Body of pancreas (tissue), 4 donors: ENCODE measurements at regions of chr15 and their contacts with region 1.

Region 1: DNA sequence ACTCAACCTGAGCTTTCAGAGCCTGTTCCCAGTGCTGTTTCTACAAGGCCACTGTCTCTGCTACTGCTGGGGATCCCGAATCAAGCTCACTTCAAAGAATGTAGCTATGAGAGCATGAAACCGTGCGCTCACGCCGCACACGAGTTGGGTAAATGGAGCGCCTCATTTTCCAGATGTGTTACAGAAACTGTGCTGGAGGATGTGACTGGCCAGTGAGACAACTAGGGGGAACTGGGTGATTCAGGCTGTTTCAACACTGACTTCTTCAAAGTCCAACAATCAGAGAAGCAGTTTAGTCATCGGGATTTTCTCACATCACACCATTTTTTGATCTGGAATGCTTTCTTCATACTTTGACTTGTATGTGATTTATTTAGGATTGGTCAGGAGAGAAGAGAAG is 3.5 kb downstream of the ZNF710 start:
- DNase-seq: peak in 3 of 4 donors; percentile 46 to 68 (median 48)
- ATAC-seq: no peak
- H3K4me3 ChIP-seq: no peak overlapping the region
- H3K27ac ChIP-seq: peak overlapping the region; percentile 60 to 99 (median 94)
- H3K4me1 ChIP-seq: peaks cover 67% of the 10 kb centered on the region
- H3K27me3 ChIP-seq: no peaks in the 10 kb centered on the region
- CTCF ChIP-seq: no peak
- POLR2A ChIP-seq: peak in 2 of 3 donors; percentile 31 to 50

Region 2: GRCh38 chr15:90075420-90076289 is 71.0 kb after region 1 on chr15:
- intact Hi-C with region 1: loop called (anchors 5 kb)
- DNase-seq: peak; percentile 82 to 92 (median 89)
- ATAC-seq: peak; percentile 82
- H3K4me3 ChIP-seq: no peak overlapping the region
- H3K27ac ChIP-seq: peak overlapping the region; percentile 79 to 93 (median 88)
- H3K4me1 ChIP-seq: peaks cover 58% of the 10 kb centered on the region
- H3K27me3 ChIP-seq: no peaks in the 10 kb centered on the region
- CTCF ChIP-seq: no peak
- POLR2A ChIP-seq: no peak